Left cardiac atrium (tissue), 4 donors: ENCODE measurements at regions of chr9 and their contacts with region 1.

Region 1: GRCh38 chr9:130343445-130343918 is 77.9 kb downstream of the HMCN2 start:
- DNase-seq: no peak
- ATAC-seq: peak in 1 of 2 donors; percentile 27

Region 2: DNA sequence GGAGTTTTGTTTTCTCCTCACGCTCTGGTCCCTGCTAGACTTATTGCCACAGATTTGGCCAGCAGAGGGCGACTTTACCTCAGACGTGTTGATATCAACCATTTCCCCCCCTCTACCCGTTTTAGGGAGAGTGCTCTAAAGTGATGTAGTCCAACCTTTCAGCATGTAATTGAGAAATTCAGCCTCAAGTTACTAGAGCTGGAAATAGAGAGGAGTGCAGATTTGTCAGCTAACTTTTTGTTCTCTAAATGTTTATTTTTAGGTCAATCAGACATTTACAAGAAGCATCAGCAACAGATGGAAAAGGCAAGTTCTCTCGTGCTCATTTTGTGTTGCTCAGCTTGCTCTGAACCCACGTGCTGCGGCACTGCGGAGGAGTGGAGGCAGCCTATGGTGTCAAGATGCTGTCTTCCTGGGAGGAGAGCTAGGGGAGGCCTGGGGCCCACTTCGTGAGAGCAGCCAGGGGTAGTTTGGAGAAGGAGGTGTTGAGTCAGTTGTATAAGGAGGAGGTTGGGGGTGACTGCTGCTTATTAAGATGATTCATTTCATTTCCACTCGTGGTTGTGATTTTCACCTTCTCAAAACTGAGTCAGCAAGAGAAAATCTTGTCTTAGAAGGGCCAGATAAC is 236.1 kb before region 1 on chr9:
- intact Hi-C with region 1: loop called (anchors 2 to 10 kb)
- DNase-seq: peak; percentile 89
- ATAC-seq: peak; percentile 87 to 90

Region 3: DNA sequence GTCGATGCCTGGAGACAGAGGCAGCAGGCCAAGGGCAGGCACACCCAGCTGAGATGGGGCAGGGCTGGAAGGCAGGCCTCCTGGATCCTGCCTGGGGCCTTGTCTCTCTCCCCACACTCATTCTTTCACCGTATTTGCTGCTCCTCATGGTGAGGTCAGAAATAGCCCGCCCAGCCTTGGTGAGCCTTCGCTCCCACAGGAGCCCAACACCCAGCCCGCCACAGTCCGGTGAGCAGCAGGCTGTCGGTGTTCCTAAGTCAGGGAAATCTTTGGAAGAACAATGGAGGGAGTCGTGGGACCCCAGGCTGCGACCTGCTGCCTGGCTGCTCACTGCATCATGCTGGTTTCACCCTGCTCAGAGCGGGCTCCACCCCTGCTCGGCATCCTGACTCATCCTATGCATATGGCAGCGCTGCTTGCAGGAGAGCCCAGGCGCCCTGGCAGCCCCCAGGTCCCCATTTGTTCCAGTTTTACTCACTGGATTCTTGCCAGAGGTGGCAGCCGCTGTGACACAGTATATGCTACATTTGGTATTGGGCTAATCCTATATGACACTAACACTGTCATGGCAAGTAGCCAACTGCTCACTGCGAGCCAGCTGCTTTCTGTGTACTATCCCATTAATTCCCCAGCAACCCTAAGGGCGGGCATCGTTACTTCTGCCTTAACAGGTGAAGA is 224.5 kb before region 1 on chr9:
- intact Hi-C with region 1: loop called in 1 of 2 experiments (anchors 10 kb)
- DNase-seq: no peak
- ATAC-seq: peak in 1 of 2 donors; percentile 46

Region 4: DNA sequence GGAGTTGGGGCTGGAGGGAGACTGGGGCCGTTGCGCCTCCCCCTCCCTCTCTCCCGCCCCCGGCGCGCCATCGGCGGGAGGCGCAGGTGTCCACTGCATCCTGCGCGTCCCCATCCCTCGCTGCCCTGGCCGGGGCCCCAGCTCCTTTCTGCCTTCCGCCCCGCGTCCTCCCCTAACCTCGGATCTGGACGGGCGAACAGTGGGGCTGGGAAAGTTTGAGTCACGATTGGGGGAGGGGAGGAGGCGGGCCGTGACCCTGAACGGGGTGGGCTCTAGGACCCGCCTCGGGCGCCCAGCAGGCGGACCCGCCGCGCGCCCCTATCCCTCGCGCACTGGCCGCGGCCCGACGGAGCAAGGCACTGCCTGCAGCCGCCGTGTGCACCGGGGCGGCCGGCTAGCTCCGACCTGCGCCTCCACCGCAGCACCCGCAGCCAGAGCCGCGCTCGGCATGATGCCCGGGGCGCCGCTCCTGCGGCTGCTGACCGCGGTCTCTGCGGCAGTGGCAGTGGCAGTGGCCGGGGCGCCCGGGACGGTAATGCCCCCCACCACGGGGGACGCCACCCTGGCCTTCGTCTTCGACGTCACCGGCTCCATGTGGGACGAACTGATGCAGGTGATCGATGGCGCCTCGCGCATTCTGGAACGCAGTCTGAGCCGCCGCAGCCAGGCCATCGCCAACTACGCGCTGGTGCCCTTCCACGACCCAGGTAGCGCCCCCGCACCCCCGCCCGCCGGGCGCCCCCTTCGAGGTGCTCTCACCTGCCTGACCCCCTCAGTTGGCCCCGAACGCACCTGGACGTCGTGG is 77.8 kb before region 1 on chr9 and contains the start of gene HMCN2:
- intact Hi-C with region 1: loop called (anchors 5 kb)
- DNase-seq: peak; percentile 47
- ATAC-seq: peak; percentile 58 to 61
- total RNA-seq, gene HMCN2: 4.6 to 6.0 TPM

Region 5: DNA sequence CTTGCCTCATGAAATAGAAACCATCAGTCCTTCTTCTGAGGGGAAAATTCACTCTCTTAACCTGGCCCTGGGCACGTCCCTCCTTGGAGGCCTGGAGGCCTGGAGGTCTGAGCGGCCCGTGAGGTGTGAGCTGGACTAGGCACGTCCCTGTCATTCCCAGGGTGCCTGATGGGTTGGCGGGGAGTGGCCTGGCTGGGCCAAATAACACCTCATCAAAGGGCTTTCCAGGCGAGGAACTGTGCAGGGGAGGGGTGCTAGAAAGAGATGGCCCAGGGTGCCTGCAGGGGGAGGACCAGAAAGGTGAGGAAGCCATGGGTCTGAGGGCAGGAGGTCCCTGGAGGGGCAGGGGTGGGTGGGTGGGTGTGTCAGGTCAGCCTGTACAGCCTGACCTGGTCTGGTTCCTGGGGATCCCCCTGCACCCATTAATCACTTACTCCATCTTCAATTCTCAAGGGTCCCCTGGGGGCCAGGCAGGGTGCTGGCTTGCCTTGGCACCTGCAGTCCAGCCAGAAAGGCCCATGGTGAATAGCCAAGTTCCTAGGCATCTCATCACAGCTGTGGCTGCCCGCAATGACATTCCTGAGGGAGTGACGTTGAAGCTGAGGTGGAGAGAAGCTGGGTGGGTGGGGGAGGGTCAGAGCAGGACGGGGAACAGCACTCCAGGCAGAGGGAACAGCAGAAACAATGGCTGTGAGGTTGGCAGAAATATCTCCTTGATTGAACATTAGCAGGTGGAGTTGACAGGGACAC is 67.5 kb before region 1 on chr9:
- intact Hi-C with region 1: no loop called
- DNase-seq: no peak
- ATAC-seq: no peak